ENCODE measurements at regions of chr16 and their contacts with region 1.

Region 1: GRCh38 chr16:28291873-28292660 is at the start of gene SBK1:
- DNase-seq: peak; percentile 83
- H3K4me3 Mint-ChIP-seq: peak within 1 kb of the TSS; percentile 89
- H3K27ac Mint-ChIP-seq: peak within 1 kb of the TSS; percentile 73
- H3K4me1 Mint-ChIP-seq: peaks cover 34% of the 10 kb centered on the region
- H3K27me3 Mint-ChIP-seq: peaks cover 19% of the 10 kb centered on the region
- total RNA-seq, gene SBK1: 0.73 and 0.80 TPM in 2 replicates

Region 2: DNA sequence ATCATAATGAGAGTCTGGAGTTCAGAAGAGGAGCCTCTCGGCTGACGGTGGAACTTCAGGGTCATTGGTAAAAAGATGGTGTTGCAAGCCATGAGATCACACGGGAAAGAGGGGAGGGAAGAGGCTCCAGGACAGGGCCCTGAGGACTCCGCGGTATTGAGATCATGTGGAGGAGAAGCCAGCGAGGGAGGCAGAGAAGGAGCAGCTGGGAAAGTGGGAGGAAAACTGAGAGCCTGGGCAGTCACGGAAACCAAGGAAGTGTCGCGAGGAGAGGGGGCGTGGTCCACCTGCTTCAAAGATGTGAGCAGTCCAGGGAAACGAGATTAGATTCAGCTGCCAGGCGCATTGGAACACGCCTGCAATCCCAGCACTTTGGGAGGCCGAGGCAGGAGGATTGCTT is 27.4 kb before region 1 on chr16:
- intact Hi-C with region 1: no loop called
- DNase-seq: no peak
- H3K4me3 Mint-ChIP-seq: no peak overlapping the region
- H3K27ac Mint-ChIP-seq: no peak overlapping the region
- H3K4me1 Mint-ChIP-seq: peaks cover 1% of the 10 kb centered on the region
- H3K27me3 Mint-ChIP-seq: peaks cover 22% of the 10 kb centered on the region

Region 3: DNA sequence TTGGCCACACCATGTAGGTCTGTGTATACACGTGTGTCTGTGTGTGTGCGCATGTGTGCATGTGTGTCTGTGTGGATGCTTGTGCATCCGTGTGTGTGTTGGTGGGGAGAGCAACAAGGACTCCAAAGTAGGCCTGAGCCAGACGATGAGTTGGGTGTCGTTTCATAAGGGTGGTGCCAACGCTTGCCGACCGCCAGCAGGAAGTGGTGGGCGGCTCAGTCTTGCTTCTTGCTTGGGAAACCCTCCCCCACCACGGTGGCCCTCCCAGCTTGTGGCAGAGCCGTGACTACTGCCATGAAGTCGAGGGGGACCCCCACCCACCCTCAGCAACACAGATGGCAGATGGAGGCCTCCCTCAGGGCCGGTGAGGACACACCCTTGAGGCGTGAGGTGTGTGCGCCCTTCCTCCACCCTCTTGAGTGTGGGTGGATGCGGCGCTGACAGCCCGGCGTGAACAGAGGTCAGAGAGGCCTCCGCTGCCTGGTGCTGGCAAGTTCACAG is 17.8 kb after region 1 on chr16:
- intact Hi-C with region 1: loop called (anchors 1 kb)
- DNase-seq: peak; percentile 63
- H3K4me3 Mint-ChIP-seq: peak overlapping the region; percentile 45
- H3K27ac Mint-ChIP-seq: peak overlapping the region; percentile 84
- H3K4me1 Mint-ChIP-seq: peaks cover 24% of the 10 kb centered on the region
- H3K27me3 Mint-ChIP-seq: peaks cover 2% of the 10 kb centered on the region

Region 4: GRCh38 chr16:28491970-28492474 is 200.0 kb after region 1 on chr16 and contains the start of gene CLN3:
- intact Hi-C with region 1: loop called (anchors 10 kb)
- DNase-seq: peak; percentile 84
- H3K4me3 Mint-ChIP-seq: peak within 1 kb of the TSS; percentile 89
- H3K27ac Mint-ChIP-seq: peak within 1 kb of the TSS; percentile 100
- H3K4me1 Mint-ChIP-seq: peaks cover 62% of the 10 kb centered on the region
- H3K27me3 Mint-ChIP-seq: no peaks in the 10 kb centered on the region
- total RNA-seq, gene CLN3: 27.1 and 28.5 TPM in 2 replicates